A549 (cell line): ENCODE measurements at regions of chr20 and their contacts with region 1.

Region 1: GRCh38 chr20:17682103-17682888 is at the start of gene RRBP1:
- DNase-seq: peak; percentile 98 to 99
- ATAC-seq: peak; percentile 84 to 97
- H3K4me3 ChIP-seq: peak within 1 kb of the TSS; percentile 96
- H3K27ac ChIP-seq: peak within 1 kb of the TSS; percentile 95 to 96
- H3K4me1 ChIP-seq: peaks cover 36% of the 10 kb centered on the region
- CTCF ChIP-seq: peak; percentile 89
- EP300 ChIP-seq: no peak
- POLR2A ChIP-seq: peak; percentile 98
- RAD21 ChIP-seq: peak; percentile 22 to 43; a peak in 2 of 5 replicates
- polyA plus RNA-seq, gene RRBP1: 51.6 and 56.5 TPM in 2 replicates

Region 2: GRCh38 chr20:17530716-17531664 is 151.3 kb before region 1 on chr20 and contains the start of gene BFSP1:
- CTCF ChIA-PET with region 1: interaction called, 5 read pairs
- POLR2A ChIA-PET with region 1: interaction called, 13 read pairs
- DNase-seq: peak; percentile 58 to 79
- ATAC-seq: peak; percentile 81 to 86
- H3K4me3 ChIP-seq: peak within 1 kb of the TSS; percentile 55
- H3K27ac ChIP-seq: peak within 1 kb of the TSS; percentile 86 to 95
- H3K4me1 ChIP-seq: peaks cover 21% of the 10 kb centered on the region
- CTCF ChIP-seq: peak; percentile 12; the same call in 1 of the 3 replicates
- EP300 ChIP-seq: no peak
- POLR2A ChIP-seq: peak; percentile 43
- RAD21 ChIP-seq: no peak
- polyA plus RNA-seq, gene BFSP1: 6.1 and 7.2 TPM in 2 replicates

Region 3: DNA sequence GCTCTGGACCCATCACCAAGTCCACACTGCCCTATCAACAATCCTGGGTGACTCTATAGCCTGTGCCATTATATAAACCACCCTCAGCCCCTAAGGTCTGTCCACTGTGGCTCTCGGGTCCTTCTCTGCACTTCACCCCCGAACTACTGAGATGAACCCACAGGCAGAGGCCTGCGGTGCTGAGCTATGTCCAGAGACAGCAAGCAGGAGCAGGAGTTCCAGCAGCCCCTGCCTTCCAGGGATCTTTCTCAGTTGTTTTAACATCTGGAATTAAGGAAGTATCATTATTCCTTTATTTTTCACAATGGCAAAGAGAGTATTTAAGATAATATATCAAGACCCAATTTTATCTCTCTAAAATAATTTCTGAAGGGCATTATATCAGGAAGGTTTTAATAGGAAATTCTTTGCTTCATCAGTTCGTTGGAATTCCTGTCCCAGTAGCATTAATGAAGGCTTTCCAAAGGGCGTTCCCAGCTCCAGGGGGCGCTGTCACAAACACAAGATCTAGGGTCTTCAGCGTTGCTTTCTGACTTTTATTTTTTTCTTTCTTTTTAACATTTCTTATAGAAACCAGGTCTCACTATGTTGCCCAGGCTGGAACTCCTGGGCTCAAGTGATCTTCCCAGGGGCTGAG is 27.5 kb before region 1 on chr20:
- CTCF ChIA-PET with region 1: interaction called, 16 read pairs
- POLR2A ChIA-PET with region 1: no interaction called
- DNase-seq: peak in 1 of 2 experiments; percentile 37
- ATAC-seq: peak in 1 of 2 experiments; percentile 56; a peak in 3 of 6 replicates
- H3K4me3 ChIP-seq: no peak overlapping the region
- H3K27ac ChIP-seq: no peak overlapping the region
- H3K4me1 ChIP-seq: peaks cover 26% of the 10 kb centered on the region
- CTCF ChIP-seq: peak; percentile 79
- EP300 ChIP-seq: no peak
- POLR2A ChIP-seq: no peak
- RAD21 ChIP-seq: peak; percentile 27 to 33; a peak in 1 of 5 replicates

Region 4: GRCh38 chr20:17693444-17694001 is 11.2 kb after region 1 on chr20:
- CTCF ChIA-PET with region 1: interaction called, 51 read pairs
- POLR2A ChIA-PET with region 1: interaction called, 6 read pairs
- DNase-seq: no peak
- ATAC-seq: no peak
- H3K4me3 ChIP-seq: no peak overlapping the region
- H3K27ac ChIP-seq: no peak overlapping the region
- H3K4me1 ChIP-seq: no peaks in the 10 kb centered on the region
- CTCF ChIP-seq: no peak
- EP300 ChIP-seq: no peak
- POLR2A ChIP-seq: no peak
- RAD21 ChIP-seq: no peak

Region 5: DNA sequence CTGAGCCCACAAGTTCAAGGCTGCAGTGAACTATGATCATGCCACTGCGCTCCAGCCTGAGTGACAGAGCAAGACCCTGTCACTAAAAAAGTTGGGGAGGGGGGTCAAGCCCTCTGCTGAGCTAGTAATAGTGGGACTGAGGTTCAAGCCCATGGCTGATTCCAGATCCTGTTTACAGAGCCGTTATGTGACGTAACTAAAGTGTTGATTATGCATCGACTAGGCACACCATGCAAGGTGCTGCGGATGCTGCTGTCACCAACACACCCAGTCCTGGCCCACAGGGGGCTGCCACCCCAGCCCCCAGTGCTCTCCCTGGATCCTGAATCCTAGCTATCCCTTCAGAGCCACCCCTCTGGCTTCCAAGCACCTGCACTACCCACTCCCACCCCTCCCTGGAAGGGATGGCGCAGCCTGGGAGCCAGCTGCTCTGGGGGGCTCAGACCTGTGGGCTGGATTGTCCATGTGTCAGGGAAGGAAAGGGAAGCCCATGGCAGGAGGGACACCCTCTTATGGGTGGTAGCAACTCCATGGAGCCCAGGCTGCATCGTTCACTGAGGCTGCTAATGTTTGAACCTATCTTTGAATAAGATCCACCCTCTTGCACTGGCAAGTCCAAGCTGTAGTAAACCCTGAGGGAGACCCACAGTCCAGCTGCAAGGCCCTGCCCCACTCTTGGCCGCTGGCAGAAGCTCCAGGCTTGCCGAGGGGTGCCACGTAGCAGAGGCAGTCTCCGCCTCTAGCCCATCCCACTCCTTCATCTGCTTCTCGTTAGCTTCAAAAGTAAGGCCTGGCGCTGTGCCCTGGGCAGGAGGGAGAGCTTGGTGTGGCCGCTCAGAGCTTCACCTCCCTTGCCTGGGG is 191.3 kb after region 1 on chr20:
- CTCF ChIA-PET with region 1: interaction called, 12 read pairs
- POLR2A ChIA-PET with region 1: interaction called, 6 read pairs
- DNase-seq: peak; percentile 33 to 68
- ATAC-seq: peak; percentile 65 to 82
- H3K4me3 ChIP-seq: no peak overlapping the region
- H3K27ac ChIP-seq: peak overlapping the region; percentile 57 to 65
- H3K4me1 ChIP-seq: peaks cover 29% of the 10 kb centered on the region
- CTCF ChIP-seq: no peak
- EP300 ChIP-seq: no peak
- POLR2A ChIP-seq: no peak
- RAD21 ChIP-seq: no peak

Region 6: GRCh38 chr20:17938871-17939619 is 256.7 kb after region 1 on chr20:
- CTCF ChIA-PET with region 1: interaction called, 58 read pairs
- POLR2A ChIA-PET with region 1: interaction called, 7 read pairs
- DNase-seq: peak; percentile 58 to 75
- ATAC-seq: peak; percentile 68 to 83
- H3K4me3 ChIP-seq: no peak overlapping the region
- H3K27ac ChIP-seq: no peak overlapping the region
- H3K4me1 ChIP-seq: no peaks in the 10 kb centered on the region; the same call in 2 of the 3 replicates
- CTCF ChIP-seq: peak; percentile 61
- EP300 ChIP-seq: no peak
- POLR2A ChIP-seq: no peak
- RAD21 ChIP-seq: peak; percentile 74 to 75

Region 7: GRCh38 chr20:17995967-17996819 is 313.9 kb after region 1 on chr20:
- CTCF ChIA-PET with region 1: interaction called, 24 read pairs
- POLR2A ChIA-PET with region 1: no interaction called
- DNase-seq: peak; percentile 58 to 66
- ATAC-seq: peak; percentile 64 to 81
- H3K4me3 ChIP-seq: no peak overlapping the region
- H3K27ac ChIP-seq: no peak overlapping the region
- H3K4me1 ChIP-seq: peaks cover 4% of the 10 kb centered on the region; the same call in 2 of the 3 replicates
- CTCF ChIP-seq: peak; percentile 98
- EP300 ChIP-seq: no peak
- POLR2A ChIP-seq: no peak
- RAD21 ChIP-seq: peak; percentile 90 to 92